CD8-positive, alpha-beta T cell (primary cell): ENCODE measurements at regions of chr5 and their contacts with region 1.

Region 1: GRCh38 chr5:67156976-67157583 is 39.5 kb downstream of the CD180 start:
- DNase-seq: peak; percentile 23 to 77 (median 57)
- ATAC-seq: peak; percentile 59
- H3K4me3 ChIP-seq: no peak overlapping the region
- H3K4me3 Mint-ChIP-seq: no peak overlapping the region
- H3K27ac ChIP-seq: no peak overlapping the region
- H3K27ac Mint-ChIP-seq: peak overlapping the region; percentile 19
- H3K4me1 ChIP-seq: peaks cover 47% of the 10 kb centered on the region
- H3K4me1 Mint-ChIP-seq: peaks cover 53% of the 10 kb centered on the region
- H3K27me3 ChIP-seq: no peaks in the 10 kb centered on the region
- H3K27me3 Mint-ChIP-seq: no peaks in the 10 kb centered on the region
- CTCF ChIP-seq: peak; percentile 85

Region 2: DNA sequence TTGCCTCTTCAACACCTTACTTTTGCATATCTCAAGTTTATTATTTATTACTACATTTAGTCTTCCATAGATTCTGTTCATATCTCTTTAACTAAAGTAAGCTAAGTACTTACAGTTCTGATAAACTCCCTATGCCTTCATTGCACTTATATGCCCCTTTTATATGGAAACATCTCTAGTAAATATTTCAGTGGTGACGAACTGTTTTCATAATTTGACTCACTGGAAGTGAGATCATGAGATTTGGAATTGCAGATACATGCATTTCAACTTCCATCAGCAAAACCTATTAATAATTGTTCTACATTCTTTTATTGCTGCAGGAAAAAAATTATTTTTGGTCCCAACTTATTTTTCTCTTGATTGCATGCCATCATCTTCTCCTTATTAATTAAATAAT is 224.0 kb before region 1 on chr5:
- CTCF ChIA-PET with region 1: no interaction called
- POLR2A ChIA-PET with region 1: no interaction called
- intact Hi-C with region 1: no loop called
- DNase-seq: no peak
- ATAC-seq: no peak
- H3K4me3 ChIP-seq: no peak overlapping the region
- H3K4me3 Mint-ChIP-seq: no peak overlapping the region
- H3K27ac ChIP-seq: no peak overlapping the region
- H3K27ac Mint-ChIP-seq: no peak overlapping the region
- H3K4me1 ChIP-seq: no peaks in the 10 kb centered on the region
- H3K4me1 Mint-ChIP-seq: no peaks in the 10 kb centered on the region
- H3K27me3 ChIP-seq: no peaks in the 10 kb centered on the region
- H3K27me3 Mint-ChIP-seq: peaks cover 13% of the 10 kb centered on the region
- CTCF ChIP-seq: no peak

Region 3: GRCh38 chr5:66987949-66988838 is 168.9 kb before region 1 on chr5:
- CTCF ChIA-PET with region 1: interaction called, 3 read pairs
- POLR2A ChIA-PET with region 1: no interaction called
- intact Hi-C with region 1: loop called in 1 of 2 experiments (anchors 1 kb)
- DNase-seq: peak in 2 of 9 experiments; percentile 31 to 51
- ATAC-seq: peak; percentile 69
- H3K4me3 ChIP-seq: no peak overlapping the region
- H3K4me3 Mint-ChIP-seq: no peak overlapping the region
- H3K27ac ChIP-seq: no peak overlapping the region
- H3K27ac Mint-ChIP-seq: no peak overlapping the region
- H3K4me1 ChIP-seq: no peaks in the 10 kb centered on the region
- H3K4me1 Mint-ChIP-seq: no peaks in the 10 kb centered on the region
- H3K27me3 ChIP-seq: no peaks in the 10 kb centered on the region
- H3K27me3 Mint-ChIP-seq: no peaks in the 10 kb centered on the region
- CTCF ChIP-seq: peak; percentile 94

Region 4: GRCh38 chr5:67209142-67209771 is 52.2 kb after region 1 on chr5:
- CTCF ChIA-PET with region 1: interaction called, 537 read pairs
- POLR2A ChIA-PET with region 1: interaction called, 38 read pairs
- intact Hi-C with region 1: loop called (anchors 1 kb)
- DNase-seq: peak; percentile 12 to 84 (median 61)
- ATAC-seq: peak; percentile 51
- H3K4me3 ChIP-seq: no peak overlapping the region
- H3K4me3 Mint-ChIP-seq: peak overlapping the region; percentile 13
- H3K27ac ChIP-seq: no peak overlapping the region
- H3K27ac Mint-ChIP-seq: peak overlapping the region; percentile 86
- H3K4me1 ChIP-seq: peaks cover 49% of the 10 kb centered on the region
- H3K4me1 Mint-ChIP-seq: peaks cover 58% of the 10 kb centered on the region
- H3K27me3 ChIP-seq: no peaks in the 10 kb centered on the region
- H3K27me3 Mint-ChIP-seq: no peaks in the 10 kb centered on the region
- CTCF ChIP-seq: peak; percentile 81

Region 5: GRCh38 chr5:67221487-67222242 is 64.6 kb after region 1 on chr5:
- CTCF ChIA-PET with region 1: interaction called, 36 read pairs
- POLR2A ChIA-PET with region 1: interaction called, 5 read pairs
- intact Hi-C with region 1: no loop called
- DNase-seq: peak in 7 of 9 experiments; percentile 26 to 74 (median 52)
- ATAC-seq: peak; percentile 73
- H3K4me3 ChIP-seq: peak overlapping the region in 1 of 2 experiments; percentile 10
- H3K4me3 Mint-ChIP-seq: peak overlapping the region; percentile 71
- H3K27ac ChIP-seq: peak overlapping the region in 1 of 2 experiments; percentile 39
- H3K27ac Mint-ChIP-seq: peak overlapping the region; percentile 94
- H3K4me1 ChIP-seq: peaks cover 42% of the 10 kb centered on the region
- H3K4me1 Mint-ChIP-seq: peaks cover 61% of the 10 kb centered on the region
- H3K27me3 ChIP-seq: no peaks in the 10 kb centered on the region
- H3K27me3 Mint-ChIP-seq: no peaks in the 10 kb centered on the region
- CTCF ChIP-seq: no peak

Region 6: GRCh38 chr5:68460147-68460798 is 1303.2 kb after region 1 on chr5:
- CTCF ChIA-PET with region 1: no interaction called
- POLR2A ChIA-PET with region 1: no interaction called
- intact Hi-C with region 1: loop called in 1 of 2 experiments (anchors 10 kb)
- DNase-seq: peak in 8 of 9 experiments; percentile 13 to 81 (median 42)
- ATAC-seq: peak; percentile 55
- H3K4me3 ChIP-seq: no peak overlapping the region
- H3K4me3 Mint-ChIP-seq: no peak overlapping the region
- H3K27ac ChIP-seq: no peak overlapping the region
- H3K27ac Mint-ChIP-seq: peak overlapping the region; percentile 19
- H3K4me1 ChIP-seq: peaks cover 13% of the 10 kb centered on the region
- H3K4me1 Mint-ChIP-seq: peaks cover 18% of the 10 kb centered on the region
- H3K27me3 ChIP-seq: no peaks in the 10 kb centered on the region
- H3K27me3 Mint-ChIP-seq: no peaks in the 10 kb centered on the region
- CTCF ChIP-seq: peak; percentile 80